Activated CD4-positive, alpha-beta T cell treated with anti-CD3 and anti-CD28 coated beads for 36 hours (primary cell): ENCODE measurements at regions of chr2 and their contacts with region 1.

Region 1: DNA sequence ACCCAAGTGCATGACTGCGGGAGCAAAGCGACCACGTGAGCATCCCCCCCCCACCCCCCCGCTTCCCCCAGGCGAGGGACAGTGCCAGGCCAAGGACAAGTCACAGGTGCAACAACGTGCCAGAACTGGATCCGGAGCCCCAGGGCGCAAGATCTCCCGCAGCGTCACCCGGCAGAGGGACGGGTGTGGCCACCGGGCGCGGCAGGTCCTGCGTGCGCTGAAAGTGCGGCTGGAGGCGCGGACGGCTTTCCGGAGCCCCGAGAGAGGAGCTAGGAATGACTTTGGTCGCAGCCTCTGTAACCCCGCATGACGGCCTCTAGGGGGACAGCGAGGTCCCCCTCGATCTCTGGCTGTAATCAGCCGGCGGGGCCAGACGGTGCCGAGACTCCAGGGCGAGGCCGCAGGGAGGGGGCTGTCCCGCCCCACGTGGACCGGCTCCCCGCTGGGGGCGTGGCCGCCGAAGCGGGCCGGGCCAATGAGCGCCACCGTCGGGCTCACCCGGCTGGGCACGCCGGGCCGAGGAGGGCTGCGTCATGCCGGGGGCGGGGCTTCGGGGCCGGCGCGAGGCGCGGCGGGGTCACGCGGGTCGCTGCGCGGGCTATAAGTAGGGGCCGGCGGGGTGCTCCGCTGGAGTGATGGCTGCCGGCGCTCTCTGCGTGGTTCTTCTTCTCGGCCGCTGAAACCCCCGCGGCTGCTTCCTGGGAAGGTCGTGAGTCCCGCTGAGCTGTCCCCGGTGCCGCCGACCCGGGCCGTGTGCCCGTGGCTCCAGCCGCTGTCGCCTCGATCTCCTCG is at the start of gene SLC20A1:
- DNase-seq: peak; percentile 99
- ATAC-seq: peak; percentile 89
- H3K4me3 Mint-ChIP-seq: peak within 1 kb of the TSS; percentile 95
- H3K27ac Mint-ChIP-seq: peak within 1 kb of the TSS; percentile 79
- H3K4me1 Mint-ChIP-seq: peaks cover 58% of the 10 kb centered on the region
- H3K27me3 Mint-ChIP-seq: no peaks in the 10 kb centered on the region
- total RNA-seq, gene SLC20A1: 69.3 to 69.6 TPM

Region 2: DNA sequence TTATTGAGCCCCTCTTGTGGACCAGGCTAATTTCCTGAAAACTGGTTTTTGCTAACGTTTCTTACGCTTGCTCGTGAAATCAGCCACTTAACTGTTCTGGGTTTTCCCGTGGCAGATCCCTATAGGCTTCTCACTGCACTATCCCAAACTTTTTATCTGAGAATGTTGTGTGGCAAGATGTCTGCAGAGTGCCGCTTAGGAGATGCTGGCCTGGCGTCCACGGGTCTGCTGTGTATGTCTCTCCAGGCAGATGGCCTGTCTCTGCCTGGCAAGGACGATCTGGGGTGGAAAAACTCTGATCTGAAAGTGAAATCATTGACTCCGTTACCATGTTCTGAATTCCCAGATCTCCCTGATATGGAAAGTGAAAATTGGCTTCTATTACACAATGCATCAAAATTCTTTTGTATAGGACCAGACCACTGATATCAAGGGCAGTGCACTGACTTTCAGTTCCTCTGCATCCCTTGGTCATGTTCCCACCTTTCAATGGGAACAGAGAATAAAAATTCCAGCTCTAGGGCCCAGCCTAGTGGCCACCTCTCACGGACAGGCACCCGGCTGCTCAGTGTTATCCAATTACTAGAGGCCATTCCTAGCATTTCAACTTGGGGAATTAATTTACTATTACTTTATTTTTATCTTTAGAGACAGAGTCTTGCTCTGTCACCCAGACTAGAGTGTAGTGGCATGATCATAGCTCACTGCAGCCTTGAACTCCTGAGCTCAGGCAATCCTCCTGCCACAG is 1758.5 kb before region 1 on chr2:
- CTCF ChIA-PET with region 1: no interaction called
- POLR2A ChIA-PET with region 1: no interaction called
- intact Hi-C with region 1: no loop called
- DNase-seq: no peak
- ATAC-seq: no peak
- H3K4me3 Mint-ChIP-seq: no peak overlapping the region
- H3K27ac Mint-ChIP-seq: no peak overlapping the region
- H3K4me1 Mint-ChIP-seq: no peaks in the 10 kb centered on the region
- H3K27me3 Mint-ChIP-seq: peaks cover 25% of the 10 kb centered on the region

Region 3: GRCh38 chr2:111883661-111884591 is 761.6 kb before region 1 on chr2 and contains the start of gene ANAPC1:
- CTCF ChIA-PET with region 1: no interaction called
- POLR2A ChIA-PET with region 1: no interaction called
- intact Hi-C with region 1: loop called in 1 of 2 experiments (anchors 2 kb)
- DNase-seq: peak; percentile 92
- ATAC-seq: peak; percentile 95
- H3K4me3 Mint-ChIP-seq: peak within 1 kb of the TSS; percentile 85
- H3K27ac Mint-ChIP-seq: peak within 1 kb of the TSS; percentile 93
- H3K4me1 Mint-ChIP-seq: peaks cover 24% of the 10 kb centered on the region
- H3K27me3 Mint-ChIP-seq: no peaks in the 10 kb centered on the region
- total RNA-seq, gene ANAPC1: 85.1 to 113 TPM

Region 4: GRCh38 chr2:112092286-112093041 is 553.0 kb before region 1 on chr2:
- CTCF ChIA-PET with region 1: no interaction called
- POLR2A ChIA-PET with region 1: no interaction called
- intact Hi-C with region 1: no loop called
- DNase-seq: peak; percentile 12
- ATAC-seq: peak; percentile 83
- H3K4me3 Mint-ChIP-seq: no peak overlapping the region
- H3K27ac Mint-ChIP-seq: peak overlapping the region; percentile 3
- H3K4me1 Mint-ChIP-seq: peaks cover 12% of the 10 kb centered on the region
- H3K27me3 Mint-ChIP-seq: no peaks in the 10 kb centered on the region

Region 5: DNA sequence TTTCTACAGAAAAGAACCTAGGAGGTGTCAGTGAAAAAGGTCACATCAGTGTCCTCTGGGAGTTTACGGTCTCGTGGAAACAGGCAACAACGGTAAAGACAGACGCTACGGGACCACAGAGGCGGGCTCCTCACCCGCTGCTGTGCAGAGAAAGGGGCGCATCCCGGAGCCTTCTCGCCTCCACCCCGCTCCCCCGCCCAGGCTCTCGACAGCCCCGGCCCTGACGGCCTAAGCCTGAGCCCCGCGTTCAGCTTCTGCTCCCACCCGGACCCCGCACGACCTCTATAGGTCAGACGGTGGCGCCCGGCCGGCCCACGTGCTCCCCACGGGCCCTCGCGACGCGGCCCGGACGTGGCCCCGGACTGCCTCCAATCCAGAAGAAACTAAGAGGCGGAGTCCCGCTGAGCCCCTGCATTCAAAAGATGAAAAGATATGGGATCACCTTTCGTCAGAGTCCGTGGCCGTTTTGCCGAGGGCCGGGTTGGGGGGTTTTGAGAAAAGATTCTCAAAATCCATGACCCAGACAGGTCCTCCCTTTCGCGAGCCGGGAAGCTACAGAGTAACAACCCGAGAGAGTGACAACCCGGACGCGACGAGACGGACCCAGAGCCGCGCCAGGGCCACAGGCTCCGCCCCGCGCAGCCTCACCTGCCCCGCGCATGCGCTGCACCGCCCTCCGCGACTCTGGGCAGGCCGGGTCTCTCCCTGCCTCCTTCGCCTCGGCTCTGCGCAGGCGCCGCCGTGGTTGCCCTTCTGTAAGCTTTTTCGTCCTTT is 390.9 kb before region 1 on chr2 and contains the start of gene ZC3H8:
- CTCF ChIA-PET with region 1: no interaction called
- POLR2A ChIA-PET with region 1: no interaction called
- intact Hi-C with region 1: loop called in 1 of 2 experiments (anchors 5 kb)
- DNase-seq: peak; percentile 98
- ATAC-seq: peak; percentile 92
- H3K4me3 Mint-ChIP-seq: no peak within 1 kb of the TSS
- H3K27ac Mint-ChIP-seq: peak within 1 kb of the TSS; percentile 88
- H3K4me1 Mint-ChIP-seq: peaks cover 19% of the 10 kb centered on the region
- H3K27me3 Mint-ChIP-seq: no peaks in the 10 kb centered on the region
- total RNA-seq, gene ZC3H8: 21.6 to 27.1 TPM

Region 6: GRCh38 chr2:112542123-112542983 is 103.2 kb before region 1 on chr2 and contains the start of gene POLR1B:
- CTCF ChIA-PET with region 1: no interaction called
- POLR2A ChIA-PET with region 1: interaction called, 3 read pairs
- intact Hi-C with region 1: loop called (anchors 1 kb)
- DNase-seq: peak; percentile 87
- ATAC-seq: peak; percentile 85
- H3K4me3 Mint-ChIP-seq: no peak within 1 kb of the TSS
- H3K27ac Mint-ChIP-seq: no peak within 1 kb of the TSS
- H3K4me1 Mint-ChIP-seq: peaks cover 18% of the 10 kb centered on the region
- H3K27me3 Mint-ChIP-seq: no peaks in the 10 kb centered on the region
- total RNA-seq, gene POLR1B: 47.0 to 63.3 TPM

Region 7: DNA sequence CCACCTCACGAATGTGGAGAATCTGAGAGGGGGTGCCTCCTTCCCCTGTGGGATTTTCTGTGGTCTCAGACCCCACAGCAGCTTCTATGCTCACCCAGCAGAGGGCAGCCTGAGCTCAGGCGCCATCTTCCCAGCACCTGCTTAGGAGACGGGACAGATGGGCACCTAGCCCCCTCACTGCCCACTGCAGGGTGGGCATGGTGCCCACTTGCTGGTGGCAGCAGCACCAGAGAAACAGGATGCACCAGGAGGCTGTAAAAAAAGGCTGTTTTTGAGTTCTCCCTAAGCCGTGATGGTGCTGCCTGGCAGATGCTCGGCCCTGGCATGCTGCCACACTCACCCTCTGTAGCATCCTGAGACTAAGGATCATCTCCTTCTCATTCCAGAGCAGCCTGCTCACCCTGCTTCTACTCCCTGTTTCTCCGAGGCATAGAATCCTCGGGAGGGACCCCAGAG is 18.9 kb before region 1 on chr2:
- CTCF ChIA-PET with region 1: interaction called, 50 read pairs
- POLR2A ChIA-PET with region 1: interaction called, 28 read pairs
- intact Hi-C with region 1: loop called (anchors 1 kb)
- DNase-seq: peak; percentile 81
- ATAC-seq: peak; percentile 53
- H3K4me3 Mint-ChIP-seq: peak overlapping the region; percentile 50
- H3K27ac Mint-ChIP-seq: peak overlapping the region; percentile 82
- H3K4me1 Mint-ChIP-seq: peaks cover 65% of the 10 kb centered on the region
- H3K27me3 Mint-ChIP-seq: peaks cover 2% of the 10 kb centered on the region

Region 8: DNA sequence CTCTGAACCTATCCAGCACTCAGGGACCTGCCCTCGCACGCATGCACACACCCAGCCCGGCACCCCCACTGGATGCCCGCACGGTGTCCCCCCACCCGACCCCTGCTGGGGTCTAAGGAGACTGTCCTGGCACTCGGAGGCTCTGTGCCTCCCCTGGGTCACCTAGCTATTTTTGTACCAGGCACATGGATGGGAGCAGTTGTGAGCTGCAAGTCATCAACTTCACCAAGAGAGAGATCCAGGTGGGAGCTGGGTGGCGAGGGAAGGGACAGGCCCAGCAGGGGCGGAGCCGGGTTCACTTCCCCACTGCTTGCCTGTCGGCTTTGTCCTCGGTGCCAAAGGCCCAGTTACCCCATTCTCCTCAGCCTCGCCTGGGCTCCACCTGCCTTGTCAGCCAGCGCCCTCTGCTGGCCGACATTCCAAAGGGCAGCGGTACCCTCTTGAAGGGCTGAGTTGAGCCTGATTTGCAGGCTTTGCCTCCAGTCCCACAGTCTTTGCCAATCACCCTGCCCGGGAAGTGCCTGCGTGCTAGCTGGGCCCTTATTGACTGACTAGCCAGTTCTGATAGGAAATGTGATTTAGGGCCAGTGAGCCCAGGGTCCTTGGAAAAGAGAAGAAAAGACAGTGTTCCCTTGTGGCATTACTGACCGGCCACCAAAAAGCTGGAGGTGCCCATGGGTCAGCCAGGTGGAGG is 81.1 kb after region 1 on chr2:
- CTCF ChIA-PET with region 1: interaction called, 17 read pairs
- POLR2A ChIA-PET with region 1: no interaction called
- intact Hi-C with region 1: loop called in 1 of 2 experiments (anchors 1 kb)
- DNase-seq: peak; percentile 94
- ATAC-seq: peak; percentile 98
- H3K4me3 Mint-ChIP-seq: no peak overlapping the region
- H3K27ac Mint-ChIP-seq: no peak overlapping the region
- H3K4me1 Mint-ChIP-seq: peaks cover 3% of the 10 kb centered on the region
- H3K27me3 Mint-ChIP-seq: no peaks in the 10 kb centered on the region